Thyroid gland (tissue), 4 donors: ENCODE measurements at regions of chr17 and their contacts with region 1.

Region 1: DNA sequence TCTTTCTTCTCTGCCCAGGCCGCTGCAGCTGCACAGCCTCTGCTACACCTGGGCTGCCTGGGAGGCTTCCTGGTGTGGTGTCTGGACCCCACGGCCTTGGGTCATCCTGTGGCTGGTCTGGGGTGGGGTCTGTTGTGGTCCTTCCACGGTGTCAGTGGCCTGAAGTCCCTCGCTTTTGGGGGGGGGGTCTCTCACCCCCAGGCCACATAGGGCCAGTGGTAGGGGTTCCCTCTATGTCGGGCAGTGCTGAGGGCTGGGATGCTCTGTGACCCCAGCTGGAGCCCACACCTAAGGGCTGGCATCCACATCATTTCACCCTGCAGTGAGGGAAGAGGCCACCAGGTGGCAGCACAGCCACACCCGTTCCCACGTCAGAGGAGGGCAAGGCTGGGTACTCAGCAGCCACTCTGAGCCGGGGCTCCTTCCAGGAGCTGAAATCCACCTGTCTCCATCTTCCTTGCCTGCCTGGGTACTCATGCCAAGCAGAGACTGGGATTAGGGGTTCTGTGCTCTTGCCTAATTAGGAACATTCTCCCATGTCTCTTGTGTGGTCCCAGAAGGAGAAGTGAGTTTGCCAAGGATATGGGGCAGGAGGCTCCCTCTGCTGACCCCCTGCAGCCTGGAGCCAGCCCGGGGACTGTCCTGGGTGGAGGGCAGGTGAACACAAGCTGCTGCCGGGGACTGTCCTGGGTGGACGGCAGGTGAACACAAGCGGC is 13.0 kb downstream of the ENGASE start:
- DNase-seq: peak; percentile 74
- H3K4me3 ChIP-seq: no peak overlapping the region
- H3K27ac ChIP-seq: no peak overlapping the region
- H3K4me1 ChIP-seq: peaks cover 0 to 9% of the 10 kb centered on the region in 2 donors
- H3K27me3 ChIP-seq: no peaks in the 10 kb centered on the region
- CTCF ChIP-seq: peak; percentile 79 to 93 (median 86)
- POLR2A ChIP-seq: no peak

Region 2: DNA sequence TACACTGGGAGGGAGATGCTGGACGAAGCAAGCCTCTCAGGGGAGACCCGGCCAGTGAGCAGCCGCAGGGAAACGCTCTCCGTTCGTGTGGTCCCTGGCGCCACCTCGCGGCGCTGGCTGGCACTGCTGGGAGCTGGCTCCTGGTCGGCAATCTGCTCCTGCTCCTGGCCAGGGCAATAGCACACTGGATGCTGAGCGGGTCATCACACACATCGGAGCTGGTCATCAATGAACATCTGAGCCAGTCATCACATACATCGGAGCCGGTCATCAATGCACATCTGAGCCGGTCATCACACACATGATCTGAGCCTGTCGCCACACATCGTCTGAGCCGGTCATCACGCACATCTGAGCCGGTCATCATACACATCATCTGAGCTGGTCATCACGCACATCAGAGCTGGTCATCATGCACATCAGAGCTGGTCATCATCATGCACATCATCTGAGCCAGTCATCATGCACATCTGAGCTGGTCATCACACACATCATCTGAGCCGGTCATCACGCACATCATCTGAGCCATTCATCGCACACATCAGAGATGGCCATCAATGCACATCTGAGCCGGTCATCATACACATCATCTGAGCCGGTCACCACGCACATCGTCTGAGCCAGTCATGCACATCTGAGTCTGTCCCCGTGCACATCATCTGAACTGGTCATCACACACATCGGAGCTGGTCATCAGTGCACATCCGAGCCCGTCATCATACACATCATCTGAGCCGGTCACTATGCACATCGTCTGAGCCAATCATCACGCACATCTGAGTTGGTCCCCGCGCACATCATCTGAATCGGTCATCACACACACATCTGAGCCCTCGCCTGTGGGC is 306.0 kb after region 1 on chr17:
- intact Hi-C with region 1: loop called (anchors 2 kb)
- DNase-seq: peak; percentile 81 to 82
- H3K4me3 ChIP-seq: no peak overlapping the region
- H3K27ac ChIP-seq: no peak overlapping the region
- H3K4me1 ChIP-seq: no peaks in the 10 kb centered on the region
- H3K27me3 ChIP-seq: peaks cover 7% of the 10 kb centered on the region
- CTCF ChIP-seq: peak; percentile 66 to 99 (median 92)
- POLR2A ChIP-seq: no peak